ENCODE measurements at regions of chr9 and their contacts with region 1.

Region 1: GRCh38 chr9:114291064-114291474 is 31.8 kb upstream of the ORM1 start:
- DNase-seq: peak; percentile 78
- ATAC-seq: peak; percentile 71
- H3K4me3 Mint-ChIP-seq: no peak overlapping the region
- H3K27ac Mint-ChIP-seq: no peak overlapping the region
- H3K4me1 Mint-ChIP-seq: no peaks in the 10 kb centered on the region
- H3K27me3 Mint-ChIP-seq: peaks cover 5% of the 10 kb centered on the region

Region 2: GRCh38 chr9:113807173-113808061 is 483.7 kb before region 1 on chr9:
- CTCF ChIA-PET with region 1: no interaction called
- POLR2A ChIA-PET with region 1: no interaction called
- DNase-seq: peak; percentile 55
- ATAC-seq: no peak
- H3K4me3 Mint-ChIP-seq: no peak overlapping the region
- H3K27ac Mint-ChIP-seq: no peak overlapping the region
- H3K4me1 Mint-ChIP-seq: no peaks in the 10 kb centered on the region
- H3K27me3 Mint-ChIP-seq: peaks cover 5% of the 10 kb centered on the region

Region 3: GRCh38 chr9:114082017-114082762 is 208.9 kb before region 1 on chr9:
- CTCF ChIA-PET with region 1: interaction called, 19 read pairs
- POLR2A ChIA-PET with region 1: no interaction called
- DNase-seq: peak; percentile 88
- ATAC-seq: peak; percentile 89
- H3K4me3 Mint-ChIP-seq: no peak overlapping the region
- H3K27ac Mint-ChIP-seq: no peak overlapping the region
- H3K4me1 Mint-ChIP-seq: no peaks in the 10 kb centered on the region
- H3K27me3 Mint-ChIP-seq: no peaks in the 10 kb centered on the region

Region 4: DNA sequence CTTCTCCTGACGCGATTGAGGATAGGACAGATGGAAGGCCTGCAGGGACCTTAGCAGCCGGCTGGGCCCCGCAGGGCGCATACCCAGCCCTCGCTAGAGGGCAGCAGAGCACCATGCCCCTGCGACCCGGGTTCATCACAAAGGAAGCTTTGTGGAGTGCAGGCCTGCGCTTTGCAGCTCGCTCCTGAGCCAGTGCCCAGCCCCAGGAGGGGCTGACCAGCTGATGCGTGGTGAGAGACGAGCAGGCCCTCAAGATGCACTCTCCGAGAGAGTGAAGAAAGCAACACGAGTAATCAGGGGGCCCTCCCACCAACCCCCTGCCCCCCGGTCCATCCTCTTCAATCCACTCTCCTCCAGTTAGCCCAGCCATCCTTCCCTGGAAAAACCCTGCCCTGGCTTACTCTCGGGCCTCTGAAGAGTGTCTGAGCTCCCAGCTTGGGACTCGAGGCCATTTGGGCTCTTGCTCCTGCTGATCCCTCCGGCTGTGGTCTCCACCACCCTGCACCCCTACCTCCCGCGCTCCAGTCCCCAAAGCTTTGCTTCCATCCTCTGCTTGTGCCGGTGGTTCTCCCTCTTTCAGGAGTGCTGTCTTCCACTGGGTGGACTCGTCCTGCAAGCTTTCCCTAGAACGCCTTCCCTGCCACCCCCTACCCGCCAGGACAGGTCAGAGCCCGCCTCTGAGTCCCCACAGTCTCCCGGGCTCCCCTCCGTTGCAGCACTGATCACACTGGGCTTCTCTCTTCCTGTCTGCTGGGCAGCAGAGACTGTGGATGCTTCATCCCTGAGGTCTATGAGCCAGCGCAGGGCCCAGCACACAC is 182.8 kb before region 1 on chr9:
- CTCF ChIA-PET with region 1: interaction called, 65 read pairs
- POLR2A ChIA-PET with region 1: no interaction called
- DNase-seq: peak; percentile 75
- ATAC-seq: peak; percentile 96
- H3K4me3 Mint-ChIP-seq: no peak overlapping the region
- H3K27ac Mint-ChIP-seq: no peak overlapping the region
- H3K4me1 Mint-ChIP-seq: no peaks in the 10 kb centered on the region
- H3K27me3 Mint-ChIP-seq: peaks cover 20% of the 10 kb centered on the region

Region 5: GRCh38 chr9:114155263-114155972 is 135.7 kb before region 1 on chr9 and contains the start of gene COL27A1:
- CTCF ChIA-PET with region 1: interaction called, 42 read pairs
- POLR2A ChIA-PET with region 1: no interaction called
- DNase-seq: peak; percentile 84
- ATAC-seq: peak; percentile 90
- H3K4me3 Mint-ChIP-seq: peak within 1 kb of the TSS; percentile 66
- H3K27ac Mint-ChIP-seq: no peak within 1 kb of the TSS
- H3K4me1 Mint-ChIP-seq: peaks cover 11% of the 10 kb centered on the region
- H3K27me3 Mint-ChIP-seq: peaks cover 47% of the 10 kb centered on the region
- total RNA-seq, gene COL27A1: 0.47 to 0.99 TPM

Measured in activated CD8-positive, alpha-beta T cell treated with anti-CD3 and anti-CD28 coated beads, Interleukin-2, amount 10 ng/mL, durations not matched to agents 7 days and 5 days (primary cell).